Posterior vena cava (tissue), 2 donors: ENCODE measurements at regions of chr2 and their contacts with region 1.

Region 1: DNA sequence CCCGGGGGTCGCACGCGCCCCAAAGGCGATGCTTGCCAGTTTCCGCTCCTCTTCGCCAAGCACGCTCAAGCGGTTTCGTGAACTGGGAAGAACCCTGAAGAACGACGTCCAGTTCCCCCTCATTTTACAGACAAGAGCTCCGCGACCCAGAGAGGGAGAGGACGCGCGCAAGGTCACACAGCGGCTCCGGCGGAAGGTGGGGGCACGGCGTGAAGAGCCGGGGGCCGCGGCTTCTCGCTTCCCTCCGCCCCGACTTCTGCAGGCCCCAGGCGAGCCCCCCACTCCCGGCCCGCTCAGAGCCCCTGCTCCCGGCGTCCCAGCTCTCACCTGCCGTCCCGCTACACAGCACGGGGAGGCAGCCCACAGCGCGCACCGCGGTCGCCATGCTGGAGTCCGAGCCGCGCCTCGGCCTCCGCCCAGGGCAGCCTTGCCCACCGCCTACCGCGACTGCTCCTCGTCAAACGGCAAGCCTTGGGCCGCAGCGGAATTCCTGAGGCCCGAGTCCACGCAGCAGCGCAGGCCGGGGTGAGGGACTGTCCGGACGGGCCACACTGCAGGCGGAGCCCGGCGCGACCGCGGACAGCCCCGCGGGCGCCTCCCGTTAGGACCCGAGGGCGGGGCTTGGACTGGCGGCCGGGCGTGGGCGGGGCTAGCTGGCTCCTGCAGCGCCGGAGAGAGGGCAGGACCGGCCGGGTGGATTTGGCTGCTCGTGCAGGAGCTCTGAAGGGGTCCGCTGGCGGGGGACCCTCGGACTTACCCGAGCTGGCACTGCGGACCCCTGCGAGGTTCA is at the start of gene MRPS5:
- DNase-seq: peak; percentile 95
- total RNA-seq, gene MRPS5: 32.2 to 33.7 TPM

Region 2: DNA sequence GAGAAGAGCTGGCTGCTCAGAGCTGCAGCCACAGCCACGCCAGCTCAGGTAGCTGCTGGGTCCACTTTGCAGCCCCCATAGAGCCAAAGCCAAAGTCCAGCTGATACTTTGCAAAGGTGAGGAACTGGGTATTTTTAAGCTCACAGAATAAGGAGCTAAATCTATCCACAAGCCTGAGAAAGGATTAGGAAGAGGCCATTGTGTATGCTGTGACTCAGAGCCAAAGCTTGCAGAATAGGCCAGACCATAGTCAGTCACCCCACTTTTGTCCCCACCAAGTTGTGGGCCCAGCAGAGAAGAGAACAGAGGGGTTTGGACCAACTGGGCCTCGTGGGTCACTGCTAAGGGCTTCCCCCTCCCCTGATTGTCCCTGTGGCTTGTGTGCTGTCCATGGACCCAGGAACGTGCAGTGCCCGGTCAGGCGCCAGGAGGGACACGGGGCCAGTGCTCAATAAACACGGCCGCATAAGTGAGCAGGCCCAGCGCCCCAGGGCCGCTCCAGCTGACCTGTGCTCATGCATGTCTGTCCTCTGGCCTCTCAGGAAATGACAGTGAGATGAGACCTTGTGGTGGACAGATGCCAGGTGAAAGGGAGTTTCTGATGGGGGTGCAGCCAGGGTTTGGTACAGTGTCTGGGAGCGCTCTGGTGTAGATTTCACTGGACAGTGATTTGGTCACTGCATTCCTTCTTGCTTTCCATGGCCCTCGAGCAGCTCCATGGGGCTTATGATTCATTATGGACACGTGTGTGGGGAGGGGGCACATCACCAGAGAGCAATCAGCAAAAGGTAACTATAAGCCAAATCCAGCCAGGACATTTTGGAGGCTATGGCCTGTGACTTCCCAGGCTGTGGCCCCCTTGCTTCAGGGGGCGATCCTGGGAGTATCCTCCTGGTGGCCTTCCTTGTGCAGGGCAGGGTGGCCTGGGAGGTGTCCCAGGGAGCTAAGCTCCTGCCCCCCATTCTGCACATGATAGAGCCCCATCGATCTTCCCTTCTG is 64.8 kb before region 1 on chr2:
- intact Hi-C with region 1: loop called in 1 of 2 experiments (anchors 2 kb)
- DNase-seq: peak; percentile 60

Region 3: DNA sequence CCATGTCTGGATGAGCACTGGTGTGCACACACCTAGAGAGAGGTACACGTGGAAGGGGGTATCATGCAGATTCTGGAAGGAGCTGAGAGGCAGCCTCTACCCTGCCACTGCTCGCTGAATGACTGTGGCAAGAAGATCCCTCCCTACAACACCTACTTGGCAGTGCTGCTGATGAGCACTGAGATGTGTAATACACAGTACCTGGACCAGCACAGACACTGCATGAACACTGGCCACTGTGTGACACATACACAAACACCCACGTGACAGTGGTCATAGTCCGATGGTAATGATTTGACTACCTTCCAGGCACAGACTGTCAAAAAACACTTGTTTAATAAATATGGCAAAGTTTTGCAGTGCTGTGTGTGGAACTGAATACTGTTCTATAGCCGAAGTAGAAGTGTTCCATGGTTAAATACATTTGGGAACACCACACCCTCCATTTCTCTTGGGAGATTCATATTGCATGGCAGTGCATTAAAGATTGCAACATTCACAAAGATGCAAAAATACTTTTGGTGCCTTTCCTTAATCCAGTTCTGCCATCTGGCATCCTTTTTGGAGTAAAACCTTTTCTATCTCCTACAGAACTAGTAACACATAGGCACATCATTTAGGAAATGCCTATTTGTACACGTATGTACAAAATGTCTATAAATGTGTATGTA is 29.6 kb before region 1 on chr2:
- intact Hi-C with region 1: no loop called
- DNase-seq: no peak